Spleen (tissue), 13 donors: ENCODE measurements at regions of chr12 and their contacts with region 1.

Region 1: DNA sequence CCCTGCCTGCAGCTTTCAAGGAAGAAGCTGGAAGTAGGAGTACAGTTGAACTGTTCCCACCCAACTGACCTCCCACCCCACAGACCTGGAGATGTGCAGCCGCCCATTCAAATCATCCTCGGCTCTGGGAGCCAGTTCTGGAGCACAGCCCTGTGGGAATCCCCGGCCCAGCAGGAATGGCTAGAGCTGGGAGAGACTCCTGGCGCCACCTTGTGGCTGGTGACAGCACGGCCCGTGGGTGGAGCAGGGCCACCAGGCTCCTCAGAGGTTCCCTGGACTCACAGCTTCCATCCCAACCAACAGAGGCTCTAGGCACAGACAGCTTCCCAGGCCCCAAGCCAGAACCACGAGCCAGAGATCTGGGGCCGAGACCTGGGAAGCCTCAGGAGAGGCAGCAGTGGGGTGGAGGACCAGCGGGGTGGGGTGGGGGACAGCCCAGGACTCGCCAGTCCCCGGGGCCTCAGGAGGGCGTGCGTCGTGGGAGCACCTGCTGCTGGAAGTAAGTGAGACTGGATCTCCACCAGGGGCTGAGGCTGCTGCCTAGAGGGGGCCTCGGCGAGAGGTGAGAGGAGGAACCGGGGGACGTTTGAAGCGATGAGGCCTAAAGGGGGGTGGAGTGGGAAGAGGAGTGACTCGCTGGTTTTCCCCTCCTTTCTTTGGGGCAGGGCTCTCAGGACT is 43.4 kb downstream of the RNF34 start:
- DNase-seq: peak; percentile 93
- H3K4me3 ChIP-seq: no peak overlapping the region
- H3K27ac ChIP-seq: peak overlapping the region in 2 of 8 donors; percentile 1 to 10
- H3K4me1 ChIP-seq: peaks cover 0 to 9% (median 3%) of the 10 kb centered on the region in 6 donors
- H3K27me3 ChIP-seq: no peaks in the 10 kb centered on the region
- CTCF ChIP-seq: peak; percentile 58 to 96 (median 90)
- POLR2A ChIP-seq: no peak

Region 2: GRCh38 chr12:121334513-121335343 is 108.6 kb before region 1 on chr12:
- intact Hi-C with region 1: loop called (anchors 10 kb)
- DNase-seq: no peak
- H3K4me3 ChIP-seq: no peak overlapping the region
- H3K27ac ChIP-seq: no peak overlapping the region
- H3K4me1 ChIP-seq: peaks cover 0 to 11% (median 5%) of the 10 kb centered on the region in 6 donors
- H3K27me3 ChIP-seq: no peaks in the 10 kb centered on the region
- CTCF ChIP-seq: peak; percentile 63 to 90 (median 84)
- POLR2A ChIP-seq: no peak